ENCODE measurements at regions of chr17 and their contacts with region 1.

Region 1: DNA sequence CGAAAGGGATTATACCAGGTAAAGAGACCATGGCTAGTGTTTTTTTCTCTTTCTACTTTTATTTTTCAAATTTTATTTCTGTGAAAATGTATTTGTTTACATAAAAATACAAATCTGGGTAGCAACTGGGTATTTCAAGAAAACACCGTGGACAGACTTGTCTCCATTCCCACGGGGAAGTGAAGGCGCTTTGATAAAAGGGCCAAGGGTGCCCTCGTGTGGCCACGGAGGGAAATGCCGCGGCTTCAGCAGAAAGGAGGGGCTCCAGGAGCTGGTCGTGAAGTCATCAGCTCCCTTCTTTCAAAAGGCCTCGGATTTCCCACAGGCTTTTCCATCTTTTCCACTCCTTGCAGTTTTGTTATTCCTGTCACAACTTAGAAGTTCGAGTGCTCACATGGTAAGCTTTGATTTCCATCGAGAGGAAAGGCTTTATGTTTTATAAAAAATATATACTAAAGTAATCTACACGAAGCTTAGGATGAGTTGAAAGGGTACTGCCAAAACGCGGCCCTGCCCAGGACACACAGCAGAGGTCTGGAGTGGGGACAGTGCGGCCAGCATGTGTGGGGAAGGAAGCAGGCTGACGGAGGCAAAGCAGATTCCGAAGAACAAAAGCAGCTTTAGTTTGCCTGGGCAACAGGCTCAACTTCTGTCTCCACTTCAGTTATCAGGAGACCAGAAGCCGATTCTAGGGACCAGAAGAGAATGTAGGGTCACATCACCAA is 15.3 kb upstream of the MNT start:
- DNase-seq: peak in 1 of 2 experiments; percentile 98
- H3K4me3 ChIP-seq: no peak overlapping the region
- H3K27ac ChIP-seq: no peak overlapping the region
- H3K4me1 ChIP-seq: no peaks in the 10 kb centered on the region
- H3K27me3 ChIP-seq: no peaks in the 10 kb centered on the region
- CTCF ChIP-seq: peak; percentile 82 to 91 (median 88)
- EP300 ChIP-seq: no peak
- POLR2A ChIP-seq: no peak
- RAD21 ChIP-seq: peak; percentile 89 to 91

Region 2: GRCh38 chr17:2369551-2370210 is 46.5 kb before region 1 on chr17:
- CTCF ChIA-PET with region 1: interaction called, 42 read pairs
- POLR2A ChIA-PET with region 1: interaction called, 5 read pairs
- DNase-seq: peak in 1 of 2 experiments; percentile 77
- H3K4me3 ChIP-seq: no peak overlapping the region
- H3K27ac ChIP-seq: no peak overlapping the region
- H3K4me1 ChIP-seq: peaks cover 0 to 12% (median 5%) of the 10 kb centered on the region in 4 experiments; a peak in 3 of 7 replicates
- H3K27me3 ChIP-seq: no peaks in the 10 kb centered on the region
- CTCF ChIP-seq: peak; percentile 45 to 54 (median 48)
- EP300 ChIP-seq: no peak
- POLR2A ChIP-seq: no peak
- RAD21 ChIP-seq: peak; percentile 53 to 64

Region 3: GRCh38 chr17:2386400-2387085 is 29.6 kb before region 1 on chr17:
- CTCF ChIA-PET with region 1: interaction called, 216 read pairs
- POLR2A ChIA-PET with region 1: interaction called, 14 read pairs
- DNase-seq: no peak
- H3K4me3 ChIP-seq: no peak overlapping the region
- H3K27ac ChIP-seq: no peak overlapping the region
- H3K4me1 ChIP-seq: peaks cover 0 to 15% (median 7%) of the 10 kb centered on the region in 4 experiments; a peak in 5 of 7 replicates
- H3K27me3 ChIP-seq: no peaks in the 10 kb centered on the region
- CTCF ChIP-seq: no peak
- EP300 ChIP-seq: no peak
- POLR2A ChIP-seq: no peak
- RAD21 ChIP-seq: no peak

Region 4: DNA sequence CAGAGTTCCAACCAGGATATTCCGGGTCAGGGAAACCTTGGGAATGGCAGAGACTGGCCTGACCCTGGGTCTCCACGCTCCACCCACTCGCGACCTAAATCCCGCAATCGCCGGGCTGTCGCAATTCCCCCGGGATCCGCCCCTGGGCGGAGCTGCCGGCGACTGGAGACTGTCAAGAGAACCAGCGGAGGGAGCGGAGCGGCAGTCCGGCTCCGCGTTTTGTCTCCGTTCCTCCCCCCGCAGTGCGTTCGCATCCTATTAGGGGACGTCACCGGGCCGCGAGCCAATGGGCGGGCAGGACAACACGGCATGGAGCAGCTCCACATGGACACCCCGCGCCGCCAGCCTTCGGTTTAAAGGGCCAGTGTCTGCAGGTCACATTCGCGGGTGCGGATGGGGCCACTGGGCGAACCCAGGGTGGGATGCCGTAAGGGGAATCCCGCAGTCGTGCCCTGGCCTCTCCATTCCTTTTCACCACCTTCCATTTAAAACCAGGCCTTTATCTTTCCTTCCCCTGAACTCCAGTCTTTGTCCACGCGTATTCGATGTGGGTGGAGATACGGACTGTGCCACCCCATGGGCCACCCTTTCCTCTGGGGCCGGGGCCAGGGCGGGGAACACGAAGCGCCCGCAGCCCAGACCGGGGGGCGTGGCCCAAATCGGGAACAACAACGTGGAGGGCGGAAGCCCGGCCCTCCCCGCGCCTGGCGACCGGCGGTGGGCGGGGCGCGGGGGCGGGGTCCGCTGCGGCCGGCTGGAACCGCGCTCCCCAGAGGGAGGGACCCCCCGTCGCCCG is 14.5 kb before region 1 on chr17:
- CTCF ChIA-PET with region 1: interaction called, 27 read pairs
- POLR2A ChIA-PET with region 1: interaction called, 11 read pairs
- DNase-seq: peak; percentile 93 to 99
- H3K4me3 ChIP-seq: peak overlapping the region; percentile 79 to 96 (median 84)
- H3K27ac ChIP-seq: peak overlapping the region; percentile 94
- H3K4me1 ChIP-seq: peaks cover 3 to 24% (median 16%) of the 10 kb centered on the region in 4 experiments
- H3K27me3 ChIP-seq: peaks cover 0 to 2% (median 0%) of the 10 kb centered on the region in 4 experiments; a peak in 2 of 7 replicates
- CTCF ChIP-seq: no peak
- EP300 ChIP-seq: peak in 1 of 2 experiments; percentile 21; a peak in 1 of 3 replicates
- POLR2A ChIP-seq: peak; percentile 73 to 80
- RAD21 ChIP-seq: no peak

Region 5: DNA sequence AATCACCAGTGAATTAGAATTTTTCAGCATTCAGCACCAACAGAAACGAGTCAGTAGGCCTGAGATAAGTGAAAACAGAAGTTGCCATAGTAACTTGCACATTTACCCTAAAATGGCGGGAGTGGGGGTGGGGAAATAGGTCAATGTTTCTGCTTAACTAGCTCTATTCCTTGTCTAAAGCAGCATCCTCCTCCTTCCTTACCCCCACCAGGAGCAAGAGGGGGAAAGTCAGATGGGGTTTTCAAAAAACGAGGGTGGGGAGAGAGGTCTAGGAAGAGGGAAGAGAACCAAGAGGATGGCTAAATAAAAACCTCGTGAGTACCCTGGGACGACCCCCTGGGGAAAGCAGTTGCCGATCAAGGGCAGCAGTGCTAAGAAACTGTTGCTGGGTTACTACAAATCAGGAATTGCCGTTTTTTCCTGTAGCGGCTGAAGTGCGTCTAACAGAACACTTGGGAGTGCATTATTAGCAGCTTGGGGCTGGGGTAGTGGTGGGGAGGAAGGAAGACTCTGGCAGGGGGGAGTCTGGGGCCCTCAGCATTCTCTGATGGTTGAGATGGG is 19.1 kb after region 1 on chr17:
- CTCF ChIA-PET with region 1: interaction called, 16 read pairs
- POLR2A ChIA-PET with region 1: no interaction called
- DNase-seq: peak in 1 of 2 experiments; percentile 79
- H3K4me3 ChIP-seq: peak overlapping the region in 3 of 4 experiments; percentile 18 to 39 (median 34); a peak in 5 of 8 replicates
- H3K27ac ChIP-seq: peak overlapping the region; percentile 72
- H3K4me1 ChIP-seq: peaks cover 6 to 17% (median 13%) of the 10 kb centered on the region in 4 experiments
- H3K27me3 ChIP-seq: no peaks in the 10 kb centered on the region
- CTCF ChIP-seq: no peak
- EP300 ChIP-seq: no peak
- POLR2A ChIP-seq: no peak
- RAD21 ChIP-seq: no peak

Measured in H1 (cell line).